Sciatic nerve (tissue), 2 donors: ENCODE measurements at regions of chr1 and their contacts with region 1.

Region 1: DNA sequence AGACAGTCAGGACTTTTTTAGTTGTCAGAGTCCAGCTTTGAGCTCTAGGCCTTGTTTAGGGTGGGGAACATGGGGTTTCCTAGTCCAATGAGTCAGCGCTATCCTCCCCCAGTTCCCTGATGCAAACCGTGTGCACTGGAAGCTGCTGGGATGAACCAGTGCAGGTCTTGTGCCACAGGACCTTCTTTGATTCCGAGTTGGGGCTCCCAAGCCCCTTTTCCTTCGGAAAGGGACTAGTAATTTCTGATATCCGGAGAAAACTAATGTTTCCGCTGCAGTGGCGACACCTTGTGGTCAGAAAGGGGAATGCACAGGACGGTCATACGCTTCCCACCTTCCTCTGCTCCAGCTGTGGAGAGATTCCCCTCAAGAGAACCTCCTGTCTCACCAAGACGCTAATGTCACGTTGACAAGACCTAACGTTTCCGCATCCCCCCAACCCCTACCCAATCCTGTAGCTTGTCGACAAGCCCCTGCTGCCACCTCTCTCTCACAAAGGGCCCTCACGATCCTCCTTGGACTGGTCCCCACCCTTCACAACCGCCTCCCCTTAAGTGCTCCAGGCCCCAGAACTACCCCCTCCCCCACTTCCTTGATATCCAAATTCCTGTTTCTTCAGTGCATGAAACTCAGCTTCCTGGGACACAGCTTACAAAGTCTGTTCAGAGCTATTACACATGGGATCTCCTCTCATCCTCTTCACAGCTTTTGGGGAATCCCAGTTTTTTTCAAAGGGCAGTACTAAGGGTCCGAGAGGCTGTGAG is 30.9 kb downstream of the GPA33 start:
- DNase-seq: peak; percentile 88
- ATAC-seq: peak; percentile 74

Region 2: GRCh38 chr1:166902271-166902670 is 157.0 kb before region 1 on chr1:
- intact Hi-C with region 1: loop called (anchors 5 kb)
- DNase-seq: no peak
- ATAC-seq: no peak

Region 3: GRCh38 chr1:168379110-168379860 is 1320.1 kb after region 1 on chr1:
- intact Hi-C with region 1: loop called (anchors 5 kb)
- DNase-seq: no peak
- ATAC-seq: no peak